Esophagus squamous epithelium (tissue), 5 donors: ENCODE measurements at regions of chr6 and their contacts with region 1.

Region 1: GRCh38 chr6:141988954-141989705 is 143.6 kb upstream of the GJE1 start:
- DNase-seq: no peak
- H3K4me3 ChIP-seq: no peak overlapping the region
- H3K27ac ChIP-seq: no peak overlapping the region
- H3K4me1 ChIP-seq: no peaks in the 10 kb centered on the region
- H3K27me3 ChIP-seq: peaks cover 0 to 3% (median 0%) of the 10 kb centered on the region in 4 donors
- CTCF ChIP-seq: peak in 5 of 6 experiments; percentile 45 to 82 (median 48)
- POLR2A ChIP-seq: no peak

Region 2: GRCh38 chr6:141752677-141753076 is 236.5 kb before region 1 on chr6:
- intact Hi-C with region 1: no loop called
- DNase-seq: no peak
- H3K4me3 ChIP-seq: no peak overlapping the region
- H3K27ac ChIP-seq: no peak overlapping the region
- H3K4me1 ChIP-seq: no peaks in the 10 kb centered on the region
- H3K27me3 ChIP-seq: no peaks in the 10 kb centered on the region
- CTCF ChIP-seq: no peak
- POLR2A ChIP-seq: no peak

Region 3: GRCh38 chr6:141764388-141764787 is 224.7 kb before region 1 on chr6:
- intact Hi-C with region 1: no loop called
- DNase-seq: no peak
- H3K4me3 ChIP-seq: no peak overlapping the region
- H3K27ac ChIP-seq: no peak overlapping the region
- H3K4me1 ChIP-seq: no peaks in the 10 kb centered on the region
- H3K27me3 ChIP-seq: no peaks in the 10 kb centered on the region
- CTCF ChIP-seq: no peak
- POLR2A ChIP-seq: no peak

Region 4: GRCh38 chr6:142112451-142113061 is 123.4 kb after region 1 on chr6:
- intact Hi-C with region 1: loop called (anchors 5 kb)
- DNase-seq: no peak
- H3K4me3 ChIP-seq: no peak overlapping the region
- H3K27ac ChIP-seq: no peak overlapping the region
- H3K4me1 ChIP-seq: no peaks in the 10 kb centered on the region
- H3K27me3 ChIP-seq: no peaks in the 10 kb centered on the region
- CTCF ChIP-seq: peak in 5 of 6 experiments; percentile 55 to 78 (median 66)
- POLR2A ChIP-seq: no peak

Region 5: DNA sequence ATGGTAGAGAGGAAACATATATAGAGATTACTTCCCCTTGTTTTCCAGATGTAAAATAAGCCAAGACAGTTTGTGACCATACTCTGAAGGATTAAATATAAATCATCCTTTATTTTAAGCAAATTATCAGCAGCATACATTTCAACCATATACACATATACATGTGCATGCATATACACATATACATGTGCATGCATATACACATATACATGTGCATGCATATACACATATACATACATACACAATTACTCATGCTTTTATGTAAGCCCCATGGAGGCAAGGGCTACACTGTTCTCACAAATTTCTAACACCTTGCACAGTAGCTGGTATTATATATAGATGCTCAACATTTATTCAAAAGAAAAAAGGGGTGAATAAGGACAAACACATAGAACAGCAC is 136.1 kb after region 1 on chr6:
- intact Hi-C with region 1: no loop called
- DNase-seq: no peak
- H3K4me3 ChIP-seq: no peak overlapping the region
- H3K27ac ChIP-seq: no peak overlapping the region
- H3K4me1 ChIP-seq: no peaks in the 10 kb centered on the region
- H3K27me3 ChIP-seq: no peaks in the 10 kb centered on the region
- CTCF ChIP-seq: no peak
- POLR2A ChIP-seq: no peak

Region 6: GRCh38 chr6:142236691-142237090 is 247.6 kb after region 1 on chr6:
- intact Hi-C with region 1: no loop called
- DNase-seq: no peak
- H3K4me3 ChIP-seq: no peak overlapping the region
- H3K27ac ChIP-seq: no peak overlapping the region
- H3K4me1 ChIP-seq: no peaks in the 10 kb centered on the region
- H3K27me3 ChIP-seq: peaks cover 0 to 2% (median 0%) of the 10 kb centered on the region in 4 donors
- CTCF ChIP-seq: no peak
- POLR2A ChIP-seq: no peak